Lower leg skin (tissue), 4 donors: ENCODE measurements at regions of chr11 and their contacts with region 1.

Region 1: GRCh38 chr11:355581-356458 is 13.5 kb upstream of the B4GALNT4 start:
- DNase-seq: peak; percentile 85 to 98
- H3K4me3 ChIP-seq: no peak overlapping the region
- CTCF ChIP-seq: no peak
- POLR2A ChIP-seq: peak in 1 of 2 donors; percentile 64

Region 2: GRCh38 chr11:250740-251299 is 105.0 kb before region 1 on chr11:
- intact Hi-C with region 1: loop called (anchors 10 kb)
- DNase-seq: peak; percentile 53 to 94
- H3K4me3 ChIP-seq: no peak overlapping the region
- CTCF ChIP-seq: peak in 1 of 3 donors; percentile 10
- POLR2A ChIP-seq: no peak

Region 3: DNA sequence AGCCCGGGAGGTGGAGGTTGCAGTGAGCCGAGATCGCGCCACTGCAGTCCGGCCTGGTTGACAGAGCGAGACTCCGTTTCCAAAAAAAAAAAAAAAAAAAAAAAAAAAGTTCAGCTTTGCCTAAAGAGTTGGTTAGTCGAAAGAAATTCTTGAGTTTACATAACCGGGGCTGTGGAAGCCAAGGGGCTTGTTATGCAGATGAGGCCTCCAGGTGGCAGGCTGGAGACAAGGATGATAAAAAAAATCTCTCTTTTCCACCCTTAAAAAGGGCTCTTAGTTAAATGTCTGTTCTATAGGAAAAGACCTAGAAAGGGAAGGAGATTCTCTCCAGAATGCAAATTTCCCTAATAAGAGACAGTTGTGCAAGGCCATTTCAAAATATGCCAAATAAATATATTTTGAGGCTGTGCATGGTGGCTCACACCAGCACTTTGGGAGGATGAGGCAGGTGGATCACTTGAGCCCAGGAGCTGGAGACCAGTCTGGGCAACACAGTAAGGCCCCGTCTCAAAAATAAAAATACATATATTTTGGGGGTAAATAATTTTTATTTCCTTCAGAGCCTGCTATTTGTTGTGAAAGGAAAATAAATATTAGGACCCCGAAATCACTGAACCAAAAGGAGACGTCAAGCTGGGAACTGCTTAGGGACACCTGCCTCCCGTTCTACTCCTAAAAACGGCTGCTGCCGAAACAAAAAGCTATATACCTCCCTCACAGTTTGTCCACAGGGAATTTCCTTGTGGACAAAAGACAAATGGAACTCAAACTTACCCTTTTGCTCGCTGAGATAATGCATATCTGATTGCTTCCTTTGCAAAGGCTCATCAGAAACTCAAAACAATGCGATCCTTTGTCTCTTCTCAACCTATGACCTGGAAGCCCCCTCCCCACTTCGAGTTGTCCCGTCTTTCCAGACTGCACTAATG is 50.6 kb before region 1 on chr11:
- intact Hi-C with region 1: loop called (anchors 10 kb)
- DNase-seq: peak in 1 of 2 donors; percentile 63
- H3K4me3 ChIP-seq: no peak overlapping the region
- CTCF ChIP-seq: no peak
- POLR2A ChIP-seq: no peak

Region 4: GRCh38 chr11:406978-407739 is 51.3 kb after region 1 on chr11:
- intact Hi-C with region 1: no loop called
- DNase-seq: peak; percentile 77 to 95
- H3K4me3 ChIP-seq: peak overlapping the region; percentile 23
- CTCF ChIP-seq: no peak
- POLR2A ChIP-seq: no peak

Region 5: DNA sequence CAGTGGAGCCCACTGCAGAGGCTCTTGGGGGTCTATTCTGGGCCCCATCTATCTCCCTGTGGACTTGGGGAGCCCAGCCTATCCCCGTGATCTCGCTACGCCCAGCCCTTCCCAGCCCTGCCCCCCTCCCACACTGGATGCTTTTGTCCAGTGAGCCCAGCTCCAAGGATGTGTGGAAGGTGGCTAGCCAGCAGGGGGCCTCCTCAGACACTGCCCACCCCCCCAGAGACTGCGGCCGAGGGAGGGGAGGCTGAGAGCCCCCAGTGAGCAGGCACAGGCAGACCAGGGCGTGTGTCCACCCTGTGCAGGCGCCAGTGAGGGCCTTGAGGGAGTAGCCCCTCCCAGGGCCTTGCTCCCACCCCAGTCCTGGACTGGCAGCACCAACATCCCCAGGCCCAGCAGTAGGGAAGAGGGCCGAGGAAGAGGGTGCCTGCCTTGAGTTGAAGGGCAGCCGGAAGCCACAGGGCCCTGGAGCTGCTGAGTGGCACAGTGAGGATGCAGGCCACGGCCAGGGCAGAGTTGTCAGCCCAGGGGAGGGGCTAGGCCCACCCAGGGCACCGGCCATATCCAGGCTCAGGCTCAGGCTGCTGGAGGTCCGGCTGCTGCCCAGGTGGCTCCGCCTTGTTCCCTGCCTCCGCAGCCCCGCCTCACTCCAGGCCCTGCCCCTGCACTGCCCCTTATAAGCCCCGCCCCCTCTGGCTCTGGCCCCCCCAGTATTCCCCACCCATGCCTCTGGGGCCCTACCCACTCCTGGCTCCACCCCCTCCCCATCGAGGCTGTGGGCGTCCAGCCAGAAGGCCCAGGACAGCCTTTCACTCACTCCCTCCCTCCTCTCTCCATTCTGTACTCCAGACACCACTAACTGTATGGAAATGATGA is 1102.8 kb after region 1 on chr11:
- intact Hi-C with region 1: no loop called
- DNase-seq: no peak
- H3K4me3 ChIP-seq: no peak overlapping the region
- CTCF ChIP-seq: no peak
- POLR2A ChIP-seq: no peak